ENCODE measurements at regions of chr15 and their contacts with region 1.

Region 1: GRCh38 chr15:65008983-65009382 is 19.3 kb upstream of the SPG21 start:
- DNase-seq: no peak
- ATAC-seq: peak; percentile 60
- H3K4me3 Mint-ChIP-seq: no peak overlapping the region
- H3K27ac Mint-ChIP-seq: 0 out of 2 replicates have a peak overlapping the region, but pooled peaks have one; percentile 3
- H3K4me1 Mint-ChIP-seq: peaks cover 5% of the 10 kb centered on the region
- H3K27me3 Mint-ChIP-seq: no peaks in the 10 kb centered on the region
- CTCF ChIP-seq: no peak

Region 2: GRCh38 chr15:64961013-64961412 is 48.0 kb before region 1 on chr15:
- CTCF ChIA-PET with region 1: interaction called, 17 read pairs
- POLR2A ChIA-PET with region 1: no interaction called
- DNase-seq: no peak
- ATAC-seq: peak; percentile 84
- H3K4me3 Mint-ChIP-seq: no peak overlapping the region
- H3K27ac Mint-ChIP-seq: no peak overlapping the region
- H3K4me1 Mint-ChIP-seq: 0 out of 2 replicates have a peak, but pooled peaks cover 3% of the 10 kb centered on the region
- H3K27me3 Mint-ChIP-seq: no peaks in the 10 kb centered on the region
- CTCF ChIP-seq: no peak

Region 3: GRCh38 chr15:65049418-65049840 is 40.4 kb after region 1 on chr15:
- CTCF ChIA-PET with region 1: no interaction called
- POLR2A ChIA-PET with region 1: no interaction called
- DNase-seq: peak; percentile 91
- ATAC-seq: peak; percentile 97
- H3K4me3 Mint-ChIP-seq: peak overlapping the region; percentile 48
- H3K27ac Mint-ChIP-seq: no peak overlapping the region
- H3K4me1 Mint-ChIP-seq: peaks cover 11% of the 10 kb centered on the region; the same call in 1 of the 2 replicates
- H3K27me3 Mint-ChIP-seq: peaks cover 4% of the 10 kb centered on the region; the same call in 1 of the 2 replicates
- CTCF ChIP-seq: no peak

Region 4: GRCh38 chr15:65201905-65202304 is 192.9 kb after region 1 on chr15:
- CTCF ChIA-PET with region 1: no interaction called
- POLR2A ChIA-PET with region 1: no interaction called
- DNase-seq: no peak
- ATAC-seq: no peak
- H3K4me3 Mint-ChIP-seq: no peak overlapping the region
- H3K27ac Mint-ChIP-seq: no peak overlapping the region
- H3K4me1 Mint-ChIP-seq: no peaks in the 10 kb centered on the region
- H3K27me3 Mint-ChIP-seq: no peaks in the 10 kb centered on the region
- CTCF ChIP-seq: no peak

Measured in WTC11 (cell line).